PC-9 (cell line): ENCODE measurements at regions of chr7 and their contacts with region 1.

Region 1: GRCh38 chr7:140175221-140176121 is 1.3 kb downstream of the KDM7A start:
- DNase-seq: peak; percentile 89 to 95
- H3K4me3 ChIP-seq: peak overlapping the region; percentile 95
- H3K27ac ChIP-seq: peak overlapping the region; percentile 6; the same call in 1 of the 2 replicates
- H3K4me1 ChIP-seq: peaks cover 13% of the 10 kb centered on the region
- H3K27me3 ChIP-seq: no peaks in the 10 kb centered on the region
- CTCF ChIP-seq: peak; percentile 90

Region 2: GRCh38 chr7:139777948-139778841 is 397.3 kb before region 1 on chr7 and contains the start of gene HIPK2:
- CTCF ChIA-PET with region 1: no interaction called
- POLR2A ChIA-PET with region 1: no interaction called
- intact Hi-C with region 1: loop called (anchors 10 kb)
- DNase-seq: peak in 1 of 2 experiments; percentile 64
- H3K4me3 ChIP-seq: peak within 1 kb of the TSS; percentile 90
- H3K27ac ChIP-seq: peak within 1 kb of the TSS; percentile 45
- H3K4me1 ChIP-seq: peaks cover 39% of the 10 kb centered on the region
- H3K27me3 ChIP-seq: no peaks in the 10 kb centered on the region
- CTCF ChIP-seq: no peak
- total RNA-seq, gene HIPK2: 23.9 and 35.2 TPM in 2 replicates

Region 3: GRCh38 chr7:140062528-140063299 is 112.8 kb before region 1 on chr7 and contains the start of gene PARP12:
- CTCF ChIA-PET with region 1: no interaction called
- POLR2A ChIA-PET with region 1: interaction called, 10 read pairs
- intact Hi-C with region 1: loop called (anchors 2 kb)
- DNase-seq: peak; percentile 70 to 91
- H3K4me3 ChIP-seq: peak within 1 kb of the TSS; percentile 87
- H3K27ac ChIP-seq: no peak within 1 kb of the TSS
- H3K4me1 ChIP-seq: peaks cover 37% of the 10 kb centered on the region
- H3K27me3 ChIP-seq: no peaks in the 10 kb centered on the region
- CTCF ChIP-seq: no peak
- total RNA-seq, gene PARP12: 32.4 and 37.7 TPM in 2 replicates

Region 4: GRCh38 chr7:140144821-140145220 is 30.6 kb before region 1 on chr7:
- CTCF ChIA-PET with region 1: no interaction called
- POLR2A ChIA-PET with region 1: no interaction called
- intact Hi-C with region 1: no loop called
- DNase-seq: no peak
- H3K4me3 ChIP-seq: no peak overlapping the region
- H3K27ac ChIP-seq: no peak overlapping the region
- H3K4me1 ChIP-seq: no peaks in the 10 kb centered on the region
- H3K27me3 ChIP-seq: no peaks in the 10 kb centered on the region
- CTCF ChIP-seq: no peak

Region 5: GRCh38 chr7:140165422-140165821 is 10.0 kb before region 1 on chr7:
- CTCF ChIA-PET with region 1: interaction called, 10 read pairs
- POLR2A ChIA-PET with region 1: no interaction called
- intact Hi-C with region 1: no loop called
- DNase-seq: peak in 1 of 2 experiments; percentile 44
- H3K4me3 ChIP-seq: no peak overlapping the region
- H3K27ac ChIP-seq: peak overlapping the region; percentile 61
- H3K4me1 ChIP-seq: peaks cover 19% of the 10 kb centered on the region
- H3K27me3 ChIP-seq: no peaks in the 10 kb centered on the region
- CTCF ChIP-seq: no peak

Region 6: GRCh38 chr7:140653319-140654108 is 478.0 kb after region 1 on chr7:
- CTCF ChIA-PET with region 1: interaction called, 4 read pairs
- POLR2A ChIA-PET with region 1: no interaction called
- intact Hi-C with region 1: loop called (anchors 10 kb)
- DNase-seq: peak; percentile 63 to 64
- H3K4me3 ChIP-seq: no peak overlapping the region
- H3K27ac ChIP-seq: no peak overlapping the region
- H3K4me1 ChIP-seq: peaks cover 55% of the 10 kb centered on the region
- H3K27me3 ChIP-seq: no peaks in the 10 kb centered on the region
- CTCF ChIP-seq: peak; percentile 95